H1 (cell line): ENCODE measurements at regions of chr4 and their contacts with region 1.

Region 1: DNA sequence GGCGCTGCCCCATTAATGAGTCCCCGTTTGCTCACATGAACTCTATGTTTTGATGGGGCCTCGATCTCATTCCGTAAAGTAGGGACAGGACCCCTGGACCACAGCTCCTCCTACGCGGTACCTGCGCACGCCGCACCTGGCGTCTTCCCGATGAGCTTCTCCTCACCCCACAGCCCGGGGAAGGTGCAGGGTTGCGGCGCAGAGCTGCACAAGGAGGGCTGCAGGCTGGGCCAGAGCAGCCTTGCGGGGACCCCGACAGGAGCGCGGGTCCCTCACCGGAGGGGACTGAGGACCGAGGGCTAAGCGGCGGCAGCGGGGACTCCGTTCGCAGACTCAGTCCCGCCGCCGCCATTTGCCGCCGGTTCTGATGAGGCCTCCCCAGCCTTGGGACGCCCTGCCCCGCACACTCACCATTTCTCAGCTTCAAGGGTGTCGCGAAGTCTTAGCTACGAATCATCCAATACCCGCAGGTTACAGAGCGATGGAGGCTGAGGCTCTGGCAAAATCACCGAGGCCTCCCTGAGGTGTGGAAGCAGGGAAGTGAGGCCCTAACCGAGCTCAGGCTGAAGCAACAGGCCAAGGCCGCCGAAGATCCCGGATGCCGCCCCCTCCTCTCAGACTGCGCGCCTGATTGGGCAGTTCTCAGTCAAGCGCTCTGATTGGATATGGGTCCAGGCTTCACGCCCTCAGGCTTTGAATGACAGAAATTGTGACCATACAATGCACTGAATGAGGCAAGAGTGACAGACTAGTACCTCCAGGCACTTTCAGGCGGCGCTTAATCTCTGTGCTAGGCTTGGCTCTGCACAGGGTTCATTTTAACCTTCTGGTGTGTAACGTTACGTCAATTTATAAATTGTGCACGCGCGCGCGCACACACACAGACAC is 25.1 kb downstream of the ZNF721 start:
- DNase-seq: peak; percentile 90 to 93
- H3K4me3 ChIP-seq: peak overlapping the region; percentile 80 to 98 (median 88)
- H3K27ac ChIP-seq: peak overlapping the region; percentile 96
- H3K4me1 ChIP-seq: no peaks in the 10 kb centered on the region
- H3K27me3 ChIP-seq: no peaks in the 10 kb centered on the region
- CTCF ChIP-seq: no peak
- EP300 ChIP-seq: no peak
- POLR2A ChIP-seq: peak; percentile 91 to 99
- RAD21 ChIP-seq: no peak

Region 2: DNA sequence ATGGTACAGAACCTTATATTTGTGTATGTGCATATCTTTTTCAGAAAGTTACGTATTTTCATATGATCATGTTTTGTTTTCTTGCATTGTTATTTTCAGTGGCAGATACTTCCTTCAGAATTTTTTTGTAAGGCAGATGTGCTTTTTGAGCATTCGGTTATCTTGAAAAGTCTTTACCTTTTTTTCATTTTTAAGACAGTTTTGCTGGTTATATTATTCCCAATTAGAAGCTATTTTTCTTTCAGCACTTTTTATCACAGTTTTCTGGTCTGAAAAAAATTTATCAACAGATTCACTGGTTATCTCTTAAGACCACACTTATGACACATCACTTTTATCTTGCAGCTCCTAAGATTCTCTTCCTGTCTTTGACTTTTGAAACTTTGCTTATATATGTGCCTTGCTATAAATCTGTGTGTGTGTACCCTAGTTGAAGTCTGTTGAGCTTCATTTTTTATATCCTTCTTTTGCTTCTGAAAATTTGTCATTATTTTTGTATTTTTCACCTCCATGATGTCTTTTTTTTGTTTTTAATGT is 221.7 kb before region 1 on chr4:
- CTCF ChIA-PET with region 1: no interaction called
- POLR2A ChIA-PET with region 1: no interaction called
- DNase-seq: no peak
- H3K4me3 ChIP-seq: no peak overlapping the region
- H3K27ac ChIP-seq: no peak overlapping the region
- H3K4me1 ChIP-seq: no peaks in the 10 kb centered on the region
- H3K27me3 ChIP-seq: no peaks in the 10 kb centered on the region
- CTCF ChIP-seq: no peak
- EP300 ChIP-seq: no peak
- POLR2A ChIP-seq: no peak
- RAD21 ChIP-seq: no peak

Region 3: GRCh38 chr4:304969-305680 is 168.7 kb before region 1 on chr4 and contains the start of gene ZNF732:
- CTCF ChIA-PET with region 1: no interaction called
- POLR2A ChIA-PET with region 1: interaction called, 13 read pairs
- DNase-seq: peak in 1 of 2 experiments; percentile 89
- H3K4me3 ChIP-seq: peak within 1 kb of the TSS; percentile 87 to 99 (median 97)
- H3K27ac ChIP-seq: peak within 1 kb of the TSS; percentile 91
- H3K4me1 ChIP-seq: peaks cover 0 to 6% (median 3%) of the 10 kb centered on the region in 4 experiments; a peak in 4 of 7 replicates
- H3K27me3 ChIP-seq: no peaks in the 10 kb centered on the region
- CTCF ChIP-seq: no peak
- EP300 ChIP-seq: no peak
- POLR2A ChIP-seq: peak in 1 of 2 experiments; percentile 94; a peak in 2 of 3 replicates
- RAD21 ChIP-seq: no peak
- total RNA-seq, gene ZNF732: 33.3 and 35.7 TPM in 2 replicates

Region 4: GRCh38 chr4:337143-337931 is 136.5 kb before region 1 on chr4 and contains the start of gene ZNF141:
- CTCF ChIA-PET with region 1: no interaction called
- POLR2A ChIA-PET with region 1: interaction called, 15 read pairs
- DNase-seq: peak; percentile 86
- H3K4me3 ChIP-seq: peak within 1 kb of the TSS; percentile 85 to 99 (median 92)
- H3K27ac ChIP-seq: peak within 1 kb of the TSS; percentile 88
- H3K4me1 ChIP-seq: peaks cover 2 to 11% (median 4%) of the 10 kb centered on the region in 4 experiments; a peak in 6 of 7 replicates
- H3K27me3 ChIP-seq: peaks cover 0 to 11% (median 6%) of the 10 kb centered on the region in 4 experiments; a peak in 5 of 7 replicates
- CTCF ChIP-seq: no peak
- EP300 ChIP-seq: no peak
- POLR2A ChIP-seq: peak; percentile 77 to 96
- RAD21 ChIP-seq: no peak
- total RNA-seq, gene ZNF141: 45.9 and 50.8 TPM in 2 replicates

Region 5: DNA sequence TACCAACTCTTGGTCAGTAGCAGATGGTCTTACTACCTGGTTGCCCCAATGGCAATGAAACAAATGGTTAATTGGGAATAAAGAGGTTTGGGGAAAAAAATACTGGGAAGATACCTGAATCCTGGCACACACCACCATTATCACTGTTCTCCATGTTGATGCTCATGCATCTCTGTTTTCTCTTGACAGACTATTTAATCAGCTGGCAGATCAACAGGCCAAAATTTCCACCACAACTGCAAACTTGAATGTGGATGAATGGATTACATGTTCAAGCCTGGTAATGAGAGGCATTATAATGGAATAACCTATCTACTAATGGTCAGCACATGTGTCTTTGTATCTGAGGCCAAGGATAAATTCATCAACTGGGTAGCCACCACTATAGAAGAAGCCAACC is 20.5 kb before region 1 on chr4:
- CTCF ChIA-PET with region 1: no interaction called
- POLR2A ChIA-PET with region 1: interaction called, 10 read pairs
- DNase-seq: no peak
- H3K4me3 ChIP-seq: no peak overlapping the region
- H3K27ac ChIP-seq: no peak overlapping the region
- H3K4me1 ChIP-seq: no peaks in the 10 kb centered on the region
- H3K27me3 ChIP-seq: no peaks in the 10 kb centered on the region
- CTCF ChIP-seq: no peak
- EP300 ChIP-seq: no peak
- POLR2A ChIP-seq: no peak
- RAD21 ChIP-seq: no peak

Region 6: DNA sequence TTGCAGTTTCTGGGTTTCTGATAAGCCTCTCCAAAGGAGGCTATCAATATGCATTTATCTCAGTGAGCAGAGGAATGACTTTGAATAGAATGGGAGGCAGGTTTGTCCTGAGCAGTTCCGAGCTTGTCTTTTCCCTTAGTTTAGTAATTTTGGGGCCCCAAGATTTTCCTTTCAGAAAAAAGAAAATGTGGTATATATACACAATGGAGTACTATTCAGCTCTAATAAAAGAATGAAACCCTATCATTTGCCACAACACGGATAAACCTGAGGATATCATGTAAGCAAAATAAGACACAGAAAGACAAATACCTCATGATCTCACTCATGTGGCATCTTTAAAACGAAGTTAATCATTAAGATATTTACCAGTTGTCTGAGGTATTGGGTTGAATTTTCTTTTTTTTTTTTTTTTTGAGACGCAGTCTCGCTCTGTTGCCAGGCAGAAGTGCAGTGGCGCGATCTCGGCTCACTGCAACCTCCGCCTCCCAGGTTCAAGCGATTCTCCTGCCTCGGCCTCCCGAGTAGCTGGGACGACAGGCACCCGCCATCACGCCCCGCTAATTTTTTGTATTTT is 24.6 kb after region 1 on chr4:
- CTCF ChIA-PET with region 1: interaction called, 4 read pairs
- POLR2A ChIA-PET with region 1: interaction called, 30 read pairs
- DNase-seq: no peak
- H3K4me3 ChIP-seq: peak overlapping the region; percentile 74 to 87 (median 85)
- H3K27ac ChIP-seq: peak overlapping the region; percentile 80
- H3K4me1 ChIP-seq: peaks cover 0 to 8% (median 4%) of the 10 kb centered on the region in 4 experiments; a peak in 3 of 7 replicates
- H3K27me3 ChIP-seq: no peaks in the 10 kb centered on the region
- CTCF ChIP-seq: no peak
- EP300 ChIP-seq: no peak
- POLR2A ChIP-seq: no peak
- RAD21 ChIP-seq: no peak

Region 7: GRCh38 chr4:566508-567295 is 92.9 kb after region 1 on chr4:
- CTCF ChIA-PET with region 1: no interaction called
- POLR2A ChIA-PET with region 1: no interaction called
- DNase-seq: no peak
- H3K4me3 ChIP-seq: no peak overlapping the region
- H3K27ac ChIP-seq: no peak overlapping the region
- H3K4me1 ChIP-seq: peaks cover 0 to 2% (median 0%) of the 10 kb centered on the region in 4 experiments; a peak in 1 of 7 replicates
- H3K27me3 ChIP-seq: peaks cover 0 to 9% (median 3%) of the 10 kb centered on the region in 4 experiments; a peak in 6 of 7 replicates
- CTCF ChIP-seq: no peak
- EP300 ChIP-seq: no peak
- POLR2A ChIP-seq: no peak
- RAD21 ChIP-seq: no peak

Region 8: DNA sequence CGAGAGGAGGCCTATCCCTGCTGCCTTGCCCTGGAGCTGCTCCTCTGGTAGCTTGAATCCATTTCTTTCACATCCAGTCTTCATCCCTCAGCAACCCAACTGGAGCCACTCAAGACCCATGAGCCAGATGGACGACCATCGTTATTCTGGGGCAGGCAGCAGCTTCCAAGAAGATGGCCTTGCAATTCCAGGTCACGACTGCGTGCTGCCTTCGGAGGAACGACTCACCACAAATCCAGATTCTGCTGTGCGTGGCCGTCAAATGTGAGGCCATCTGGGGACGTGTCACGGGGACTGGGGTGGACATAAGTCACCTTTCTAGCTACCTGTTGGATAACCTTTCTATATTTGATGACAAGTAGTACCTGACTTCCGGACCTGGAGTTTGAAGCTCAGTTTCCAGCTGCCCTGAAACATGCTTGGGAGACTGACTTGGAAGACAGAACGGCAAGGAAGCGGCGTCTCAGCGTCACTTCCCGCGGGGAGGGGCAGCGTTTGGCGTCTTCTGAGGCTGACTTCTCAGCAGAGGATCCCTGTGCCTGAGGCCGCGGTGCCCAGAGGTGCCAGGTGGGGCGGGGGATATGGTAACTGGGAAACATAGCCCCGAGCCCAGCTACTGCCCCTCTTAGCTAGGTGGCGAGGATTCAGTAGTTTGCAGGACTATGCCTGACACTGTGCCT is 114.0 kb after region 1 on chr4:
- CTCF ChIA-PET with region 1: no interaction called
- POLR2A ChIA-PET with region 1: no interaction called
- DNase-seq: no peak
- H3K4me3 ChIP-seq: no peak overlapping the region
- H3K27ac ChIP-seq: no peak overlapping the region
- H3K4me1 ChIP-seq: no peaks in the 10 kb centered on the region; a peak in 1 of 7 replicates
- H3K27me3 ChIP-seq: no peaks in the 10 kb centered on the region
- CTCF ChIP-seq: no peak
- EP300 ChIP-seq: no peak
- POLR2A ChIP-seq: no peak
- RAD21 ChIP-seq: no peak